ENCODE measurements at regions of chr2 and their contacts with region 1.

Region 1: GRCh38 chr2:9813312-9814133 is 29.8 kb upstream of the TAF1B start:
- DNase-seq: peak; percentile 68 to 83 (median 74)
- ATAC-seq: peak; percentile 74
- H3K4me3 ChIP-seq: no peak overlapping the region
- H3K27ac ChIP-seq: no peak overlapping the region
- H3K4me1 ChIP-seq: peaks cover 9% of the 10 kb centered on the region
- H3K27me3 ChIP-seq: no peaks in the 10 kb centered on the region
- CTCF ChIP-seq: peak; percentile 79 to 95 (median 85)
- POLR2A ChIP-seq: no peak

Region 2: GRCh38 chr2:10097352-10098148 is 284.0 kb after region 1 on chr2:
- intact Hi-C with region 1: loop called (anchors 10 kb)
- DNase-seq: peak; percentile 72 to 80 (median 75)
- ATAC-seq: peak; percentile 98
- H3K4me3 ChIP-seq: no peak overlapping the region
- H3K27ac ChIP-seq: no peak overlapping the region
- H3K4me1 ChIP-seq: peaks cover 7% of the 10 kb centered on the region
- H3K27me3 ChIP-seq: no peaks in the 10 kb centered on the region
- CTCF ChIP-seq: peak; percentile 89 to 96 (median 92)
- POLR2A ChIP-seq: no peak

Region 3: GRCh38 chr2:10254373-10255151 is 441.0 kb after region 1 on chr2:
- intact Hi-C with region 1: no loop called
- DNase-seq: no peak
- ATAC-seq: no peak
- H3K4me3 ChIP-seq: no peak overlapping the region
- H3K27ac ChIP-seq: no peak overlapping the region
- H3K4me1 ChIP-seq: no peaks in the 10 kb centered on the region
- H3K27me3 ChIP-seq: no peaks in the 10 kb centered on the region
- CTCF ChIP-seq: no peak
- POLR2A ChIP-seq: no peak